ENCODE measurements at regions of chr10 and their contacts with region 1.

Region 1: DNA sequence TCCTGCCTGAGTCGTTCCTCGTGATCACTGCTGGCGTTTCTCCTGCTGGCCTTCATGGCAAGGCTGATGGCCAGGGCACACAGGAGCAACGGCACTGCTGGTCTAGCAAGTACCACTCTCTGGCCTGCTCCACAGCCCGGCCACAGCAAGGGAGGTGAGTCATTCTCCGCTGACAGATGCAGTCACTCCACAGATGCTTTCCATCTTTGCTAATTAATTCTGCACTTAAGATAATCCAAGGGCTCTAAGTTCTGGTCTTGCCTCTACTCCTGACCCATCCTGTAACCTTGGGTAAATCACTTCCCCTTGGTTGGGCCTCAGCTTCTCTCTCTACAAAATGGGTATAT is 244.4 kb downstream of the RPS24 start:
- DNase-seq: no peak
- H3K4me3 ChIP-seq: no peak overlapping the region
- H3K27ac ChIP-seq: no peak overlapping the region
- H3K4me1 ChIP-seq: peaks cover 0 to 8% (median 5%) of the 10 kb centered on the region in 4 experiments; a peak in 6 of 7 replicates
- H3K27me3 ChIP-seq: no peaks in the 10 kb centered on the region
- CTCF ChIP-seq: no peak
- EP300 ChIP-seq: no peak
- POLR2A ChIP-seq: no peak
- RAD21 ChIP-seq: no peak

Region 2: GRCh38 chr10:78263521-78263988 is 14.5 kb before region 1 on chr10:
- CTCF ChIA-PET with region 1: interaction called, 94 read pairs
- POLR2A ChIA-PET with region 1: no interaction called
- DNase-seq: no peak
- H3K4me3 ChIP-seq: no peak overlapping the region
- H3K27ac ChIP-seq: no peak overlapping the region
- H3K4me1 ChIP-seq: 0 out of 7 replicates have a peak, but pooled peaks cover 0 to 2% (median 0%) of the 10 kb centered on the region in 4 experiments
- H3K27me3 ChIP-seq: no peaks in the 10 kb centered on the region
- CTCF ChIP-seq: no peak
- EP300 ChIP-seq: no peak
- POLR2A ChIP-seq: no peak
- RAD21 ChIP-seq: no peak

Measured in H1 (cell line).